Activated CD8-positive, alpha-beta memory T cell treated with anti-CD3 and anti-CD28 coated beads, Interleukin-2, amount 10 ng/mL, durations not matched to agents 7 days and 5 days (primary cell): ENCODE measurements at regions of chr6 and their contacts with region 1.

Region 1: GRCh38 chr6:127951172-127951917 is 50.5 kb upstream of the THEMIS start:
- DNase-seq: no peak
- ATAC-seq: peak; percentile 55
- H3K4me3 Mint-ChIP-seq: peak overlapping the region; percentile 61
- H3K27ac Mint-ChIP-seq: peak overlapping the region; percentile 97
- H3K4me1 Mint-ChIP-seq: peaks cover 72% of the 10 kb centered on the region
- H3K27me3 Mint-ChIP-seq: no peaks in the 10 kb centered on the region

Region 2: DNA sequence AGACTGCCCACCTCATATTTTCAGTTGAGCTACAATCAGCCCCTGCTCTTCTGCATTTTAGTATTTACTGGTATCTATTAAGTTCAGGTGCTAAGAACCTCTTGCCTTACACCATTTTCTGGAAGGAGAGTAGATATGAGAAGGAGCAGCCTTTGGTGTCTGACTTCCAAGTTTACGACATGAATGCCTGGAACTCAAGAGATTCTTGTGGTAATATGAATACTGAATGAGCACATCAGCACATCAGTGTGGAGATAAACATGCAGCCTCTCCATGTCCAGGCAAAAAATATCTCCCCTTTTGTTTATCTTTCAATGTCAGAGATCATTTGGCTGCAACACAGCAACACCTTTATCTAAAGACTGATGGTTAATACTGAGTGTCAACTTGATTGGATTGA is 15.3 kb after region 1 on chr6:
- CTCF ChIA-PET with region 1: interaction called, 25 read pairs
- DNase-seq: no peak
- ATAC-seq: no peak
- H3K4me3 Mint-ChIP-seq: no peak overlapping the region
- H3K27ac Mint-ChIP-seq: peak overlapping the region; percentile 95
- H3K4me1 Mint-ChIP-seq: peaks cover 40% of the 10 kb centered on the region
- H3K27me3 Mint-ChIP-seq: no peaks in the 10 kb centered on the region